CD4-positive, alpha-beta memory T cell (primary cell): ENCODE measurements at regions of chr2 and their contacts with region 1.

Region 1: DNA sequence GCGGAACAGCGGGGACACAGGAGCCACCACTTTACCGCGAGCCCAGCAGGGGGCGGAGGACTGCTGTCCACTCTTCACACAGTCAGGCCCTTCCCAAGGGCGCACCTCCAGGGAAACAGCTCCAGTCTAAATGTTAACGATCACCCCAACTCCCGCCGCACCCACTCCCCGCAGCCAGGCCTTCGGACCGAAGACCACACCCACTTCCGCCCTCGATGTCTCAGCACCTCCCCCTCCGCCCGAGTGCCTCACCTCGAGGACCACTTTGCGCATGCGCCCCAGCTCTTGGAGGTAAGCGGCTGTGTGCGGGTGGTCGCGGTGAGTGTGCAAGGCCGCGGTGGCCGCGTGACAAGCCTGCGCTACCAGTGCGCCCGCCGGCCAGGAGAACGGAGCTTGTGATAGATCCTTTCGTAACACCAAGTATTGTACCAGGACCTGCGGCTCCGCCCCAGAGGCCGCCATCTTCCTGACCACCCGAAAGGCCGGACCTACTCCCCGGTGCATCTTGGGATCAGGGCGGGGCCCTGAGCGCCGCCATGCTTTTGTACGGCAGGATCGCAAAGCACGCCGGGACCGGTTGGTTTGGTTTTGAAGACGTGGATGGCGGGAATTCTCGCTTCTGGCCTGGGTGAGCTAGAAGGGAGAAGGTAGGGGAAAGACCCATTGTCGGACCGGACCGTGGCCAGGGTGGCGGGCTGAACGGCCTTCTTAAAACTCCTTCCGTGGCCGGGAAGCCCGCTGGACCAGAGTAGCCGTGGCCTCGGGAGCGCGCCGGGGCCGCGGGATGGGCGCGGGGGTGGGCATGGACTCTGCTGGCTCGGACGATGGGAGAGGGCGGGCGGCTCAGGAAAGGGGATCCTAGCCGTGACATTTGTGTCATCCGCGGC is at the starts of genes CENPO and PTRHD1:
- DNase-seq: peak; percentile 96 to 98 (median 97)
- H3K4me3 ChIP-seq: peak within 1 kb of the TSS; percentile 85 to 97
- H3K4me3 Mint-ChIP-seq: peak within 1 kb of the TSS; percentile 94 to 99 (median 96)
- H3K27ac ChIP-seq: peak within 1 kb of the TSS; percentile 93
- H3K27ac Mint-ChIP-seq: peak within 1 kb of the TSS; percentile 98 to 100 (median 99)
- H3K4me1 ChIP-seq: peaks cover 17% of the 10 kb centered on the region
- H3K4me1 Mint-ChIP-seq: peaks cover 10 to 25% (median 17%) of the 10 kb centered on the region in 4 donors
- H3K27me3 ChIP-seq: no peaks in the 10 kb centered on the region
- H3K27me3 Mint-ChIP-seq: no peaks in the 10 kb centered on the region
- total RNA-seq, gene CENPO: 4.6 to 6.1 TPM
- total RNA-seq, gene PTRHD1: 12.0 to 12.8 TPM

Region 2: DNA sequence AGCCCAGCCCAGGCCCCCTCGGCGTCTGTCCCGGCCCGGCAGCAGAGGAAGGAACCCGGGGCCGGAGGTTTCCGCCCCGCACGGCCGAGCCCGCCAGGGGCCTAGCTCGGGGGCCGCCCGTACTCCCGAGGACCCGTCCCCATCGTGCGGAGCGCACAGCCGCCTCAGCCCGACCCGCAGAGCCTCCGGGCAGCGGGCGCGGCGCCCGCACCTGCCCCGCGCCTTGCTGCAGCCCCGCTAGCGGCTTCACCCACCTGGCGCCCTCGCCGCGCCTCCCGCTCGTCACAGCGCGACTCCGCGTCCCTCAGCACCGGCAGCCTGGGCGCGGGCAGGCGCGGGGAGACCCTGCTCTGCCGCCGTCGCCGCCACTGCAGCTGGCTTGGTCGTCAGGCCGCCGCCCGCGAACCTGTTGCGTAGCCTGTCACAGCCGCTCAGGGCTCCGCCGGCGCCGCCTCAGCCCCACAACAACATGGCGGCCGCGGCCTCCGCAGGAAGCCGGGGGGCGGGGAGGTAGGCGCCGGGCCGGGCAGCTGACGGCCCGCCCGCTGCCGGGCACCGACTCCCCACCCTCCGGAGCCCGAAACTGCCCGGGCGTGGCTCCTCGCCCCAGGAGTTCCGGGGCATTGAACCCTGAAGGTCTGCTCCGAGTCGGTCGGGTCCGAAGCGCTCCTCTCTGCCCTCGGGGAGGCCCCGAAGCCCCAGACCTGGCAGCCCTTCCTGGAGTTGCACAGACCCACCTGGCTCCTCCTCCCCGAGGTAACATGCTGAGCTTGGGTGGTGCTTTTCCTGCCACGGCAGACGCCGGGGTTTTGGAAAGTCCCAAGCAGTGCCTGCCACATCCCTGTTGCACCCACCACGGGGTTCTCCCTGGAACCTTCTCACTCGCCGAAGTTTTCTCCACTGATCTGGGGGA is 432.8 kb before region 1 on chr2 and contains the start of gene ITSN2:
- CTCF ChIA-PET with region 1: no interaction called
- POLR2A ChIA-PET with region 1: interaction called, 6 read pairs
- intact Hi-C with region 1: loop called (anchors 5 kb)
- DNase-seq: peak; percentile 82 to 90 (median 86)
- H3K4me3 ChIP-seq: peak within 1 kb of the TSS; percentile 24 to 89
- H3K4me3 Mint-ChIP-seq: peak within 1 kb of the TSS; percentile 90 to 96 (median 94)
- H3K27ac ChIP-seq: peak within 1 kb of the TSS; percentile 96
- H3K27ac Mint-ChIP-seq: peak within 1 kb of the TSS; percentile 91 to 98 (median 96)
- H3K4me1 ChIP-seq: peaks cover 31% of the 10 kb centered on the region
- H3K4me1 Mint-ChIP-seq: peaks cover 18 to 41% (median 30%) of the 10 kb centered on the region in 4 donors
- H3K27me3 ChIP-seq: no peaks in the 10 kb centered on the region
- H3K27me3 Mint-ChIP-seq: no peaks in the 10 kb centered on the region
- total RNA-seq, gene ITSN2: 133 to 135 TPM

Region 3: DNA sequence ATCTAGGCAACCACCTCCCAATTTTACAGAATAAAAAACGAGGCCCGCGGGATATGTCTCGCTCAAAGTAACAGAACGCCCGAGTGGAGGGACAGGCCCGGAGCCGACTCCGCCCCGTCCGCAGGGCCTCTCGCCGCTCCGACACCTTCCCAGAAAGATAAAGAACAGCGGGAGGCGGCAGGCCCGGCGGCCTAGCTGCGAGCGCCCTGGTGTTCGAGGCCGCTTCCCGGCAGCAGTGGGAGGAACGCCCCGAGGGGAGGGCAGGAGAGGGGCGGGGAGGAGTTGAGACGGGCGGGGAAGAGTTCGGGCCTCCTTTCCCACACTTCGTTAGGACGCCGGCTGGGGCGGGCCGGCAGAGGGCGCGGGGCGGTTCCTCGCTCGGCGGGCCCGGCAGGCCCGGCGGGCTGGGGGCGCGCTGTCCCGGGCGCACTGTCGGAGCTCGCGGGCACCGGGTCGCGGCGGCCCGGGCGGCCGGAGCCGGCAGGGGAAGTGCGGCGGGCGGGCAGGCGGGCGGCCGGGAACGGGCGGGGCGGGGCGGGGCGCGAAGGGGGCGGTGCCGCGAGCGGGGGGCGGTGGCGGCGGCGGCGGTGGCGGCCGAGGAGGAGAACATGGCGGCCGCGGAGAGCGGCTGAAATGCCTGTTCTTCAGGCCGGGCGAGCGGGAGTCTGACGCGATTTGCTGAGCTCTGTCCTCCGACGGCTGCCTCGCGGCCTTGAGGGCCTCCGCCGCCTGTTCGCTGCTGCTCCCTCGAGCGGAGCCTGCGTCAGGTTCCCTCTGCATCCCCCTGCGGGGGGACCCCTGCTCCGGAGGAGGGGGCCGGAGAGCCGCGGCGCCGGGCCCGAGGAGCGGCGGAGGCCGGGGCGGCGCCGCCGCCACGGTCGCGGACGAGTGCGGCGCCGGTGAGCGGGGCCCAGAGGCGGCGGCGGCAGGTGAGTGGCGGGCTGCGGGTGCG is 302.2 kb before region 1 on chr2 and contains the start of gene NCOA1:
- CTCF ChIA-PET with region 1: no interaction called
- POLR2A ChIA-PET with region 1: interaction called, 20 read pairs
- intact Hi-C with region 1: loop called (anchors 2 kb)
- DNase-seq: peak; percentile 90 to 92 (median 92)
- H3K4me3 ChIP-seq: peak within 1 kb of the TSS; percentile 51 to 62
- H3K4me3 Mint-ChIP-seq: peak within 1 kb of the TSS; percentile 87 to 95 (median 90)
- H3K27ac ChIP-seq: peak within 1 kb of the TSS; percentile 84
- H3K27ac Mint-ChIP-seq: peak within 1 kb of the TSS; percentile 94 to 98 (median 97)
- H3K4me1 ChIP-seq: peaks cover 51% of the 10 kb centered on the region
- H3K4me1 Mint-ChIP-seq: peaks cover 39 to 57% (median 50%) of the 10 kb centered on the region in 4 donors
- H3K27me3 ChIP-seq: no peaks in the 10 kb centered on the region
- H3K27me3 Mint-ChIP-seq: no peaks in the 10 kb centered on the region
- total RNA-seq, gene NCOA1: 40.6 to 46.2 TPM

Region 4: GRCh38 chr2:24568551-24568950 is 224.6 kb before region 1 on chr2:
- CTCF ChIA-PET with region 1: no interaction called
- POLR2A ChIA-PET with region 1: no interaction called
- intact Hi-C with region 1: no loop called
- DNase-seq: no peak
- H3K4me3 ChIP-seq: no peak overlapping the region
- H3K4me3 Mint-ChIP-seq: peak overlapping the region in 1 of 8 donors; percentile 26
- H3K27ac ChIP-seq: no peak overlapping the region
- H3K27ac Mint-ChIP-seq: peak overlapping the region in 3 of 7 donors; percentile 63 to 70 (median 64)
- H3K4me1 ChIP-seq: peaks cover 5% of the 10 kb centered on the region
- H3K4me1 Mint-ChIP-seq: peaks cover 23 to 47% (median 30%) of the 10 kb centered on the region in 4 donors
- H3K27me3 ChIP-seq: no peaks in the 10 kb centered on the region
- H3K27me3 Mint-ChIP-seq: no peaks in the 10 kb centered on the region

Region 5: DNA sequence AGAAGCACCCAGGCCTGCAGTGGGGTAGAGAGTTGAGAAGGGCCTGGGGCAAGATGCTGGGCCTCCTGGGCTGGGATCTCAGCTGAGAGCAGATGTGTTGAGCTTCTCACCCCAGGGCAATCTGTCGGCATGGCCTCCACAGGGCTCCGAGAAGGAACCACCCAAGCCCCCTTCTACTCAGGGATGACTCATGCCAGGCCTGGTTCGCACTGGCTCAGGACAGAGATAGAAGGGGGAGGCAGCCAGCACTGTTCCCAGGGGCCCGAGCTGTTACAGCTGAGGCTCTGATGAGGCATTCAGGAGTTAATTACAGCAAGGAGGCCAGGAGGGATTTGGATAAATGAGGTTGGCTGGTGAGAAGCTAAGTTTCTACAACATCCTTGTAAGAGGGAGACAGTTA is 62.6 kb after region 1 on chr2:
- CTCF ChIA-PET with region 1: no interaction called
- POLR2A ChIA-PET with region 1: no interaction called
- intact Hi-C with region 1: no loop called
- DNase-seq: no peak
- H3K4me3 ChIP-seq: no peak overlapping the region
- H3K4me3 Mint-ChIP-seq: no peak overlapping the region
- H3K27ac ChIP-seq: no peak overlapping the region
- H3K27ac Mint-ChIP-seq: peak overlapping the region in 2 of 7 donors; percentile 47 to 64
- H3K4me1 ChIP-seq: no peaks in the 10 kb centered on the region
- H3K4me1 Mint-ChIP-seq: no peaks in the 10 kb centered on the region
- H3K27me3 ChIP-seq: no peaks in the 10 kb centered on the region
- H3K27me3 Mint-ChIP-seq: no peaks in the 10 kb centered on the region

Region 6: DNA sequence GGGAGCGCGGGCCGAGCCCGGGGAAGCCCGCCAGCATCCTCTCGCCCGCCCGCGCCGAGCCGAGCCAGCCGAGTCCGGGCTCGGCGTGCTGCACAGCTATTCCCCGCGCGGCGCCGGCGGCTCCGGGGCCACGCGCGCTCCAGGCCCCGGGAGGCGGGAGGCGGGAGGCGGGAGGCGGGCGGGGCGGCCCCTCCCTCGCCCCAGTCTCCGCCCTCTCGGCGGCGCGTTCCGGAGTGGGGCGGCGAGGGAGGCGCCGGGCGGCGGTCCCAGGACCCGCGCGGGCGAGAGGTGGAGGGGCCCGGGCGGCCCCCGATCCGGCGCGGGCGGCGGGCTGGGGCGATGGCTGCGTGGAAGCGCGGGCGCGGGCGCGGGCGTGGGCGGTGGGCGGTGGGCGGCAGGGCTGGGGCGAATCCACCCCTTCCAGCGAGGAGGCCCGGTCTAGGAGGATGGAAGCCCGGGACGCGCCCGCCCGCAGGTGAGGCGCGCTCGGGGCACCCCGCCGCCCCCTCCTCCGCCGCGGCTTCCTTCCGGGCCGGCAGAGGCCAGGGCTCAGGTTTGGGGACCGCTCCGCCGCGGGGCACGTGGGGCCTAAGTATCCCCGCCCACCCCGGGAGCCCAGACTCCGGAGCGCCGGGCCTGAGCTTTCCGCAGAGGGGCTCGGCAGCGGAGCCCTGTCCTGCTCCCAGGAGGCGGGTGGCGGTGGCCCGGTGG is 127.1 kb after region 1 on chr2 and contains the start of gene ADCY3:
- CTCF ChIA-PET with region 1: no interaction called
- POLR2A ChIA-PET with region 1: interaction called, 5 read pairs
- intact Hi-C with region 1: loop called (anchors 2 kb)
- DNase-seq: peak; percentile 52 to 70 (median 62)
- H3K4me3 ChIP-seq: peak within 1 kb of the TSS; percentile 49 to 62
- H3K4me3 Mint-ChIP-seq: peak within 1 kb of the TSS; percentile 91 to 97 (median 94)
- H3K27ac ChIP-seq: peak within 1 kb of the TSS; percentile 35
- H3K27ac Mint-ChIP-seq: peak within 1 kb of the TSS; percentile 83 to 94 (median 88)
- H3K4me1 ChIP-seq: peaks cover 36% of the 10 kb centered on the region
- H3K4me1 Mint-ChIP-seq: peaks cover 23 to 43% (median 30%) of the 10 kb centered on the region in 4 donors
- H3K27me3 ChIP-seq: no peaks in the 10 kb centered on the region
- H3K27me3 Mint-ChIP-seq: no peaks in the 10 kb centered on the region
- total RNA-seq, gene ADCY3: 14.7 to 14.9 TPM